ENCODE measurements at regions of chr2 and their contacts with region 1.

Region 1: GRCh38 chr2:181953881-181954537 is 31.6 kb upstream of the PPP1R1C start:
- DNase-seq: peak; percentile 84
- H3K4me3 ChIP-seq: peak overlapping the region; percentile 61
- H3K27ac ChIP-seq: no peak overlapping the region
- H3K4me1 ChIP-seq: peaks cover 11% of the 10 kb centered on the region
- CTCF ChIP-seq: peak; percentile 84

Region 2: DNA sequence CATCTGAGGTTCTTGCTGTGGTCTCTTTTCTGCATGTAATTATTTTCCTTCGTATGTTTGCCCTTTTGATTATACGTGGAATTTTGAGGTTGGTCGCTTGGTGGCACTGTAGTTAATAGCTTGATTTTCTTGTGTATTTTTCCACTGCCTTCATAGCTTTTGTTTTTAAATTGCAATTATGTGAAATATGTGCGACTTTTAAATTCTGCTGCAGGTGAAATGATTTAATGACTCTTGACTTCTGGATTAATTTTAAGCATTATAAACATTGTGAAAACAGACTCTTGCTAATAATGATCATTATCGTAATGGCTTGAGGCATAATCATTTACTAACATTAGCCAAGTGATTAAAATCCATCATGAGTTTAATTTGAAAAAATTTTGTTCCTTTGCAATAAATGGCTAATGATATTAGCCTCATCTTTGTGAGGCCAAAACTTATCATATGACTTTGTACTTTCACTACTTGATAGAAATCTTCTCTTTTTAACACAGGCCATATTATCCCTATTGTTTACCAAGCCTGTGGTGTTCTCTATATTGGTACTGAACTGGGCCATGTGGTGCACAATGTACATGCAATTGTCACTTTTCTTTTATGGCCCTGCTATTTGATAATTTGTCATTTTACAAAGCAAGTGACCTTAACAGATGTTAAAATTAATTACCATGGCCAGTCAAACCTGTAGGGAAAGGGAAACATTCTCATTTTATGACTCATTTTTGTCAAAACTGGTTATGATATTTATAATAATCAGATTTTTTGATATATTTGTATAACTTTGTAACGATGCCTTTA is 210.9 kb before region 1 on chr2:
- CTCF ChIA-PET with region 1: interaction called, 3 read pairs
- POLR2A ChIA-PET with region 1: no interaction called
- intact Hi-C with region 1: loop called (anchors 2 kb)
- DNase-seq: peak; percentile 46
- H3K4me3 ChIP-seq: no peak overlapping the region
- H3K27ac ChIP-seq: no peak overlapping the region
- H3K4me1 ChIP-seq: no peaks in the 10 kb centered on the region
- CTCF ChIP-seq: peak; percentile 91

Region 3: GRCh38 chr2:181904022-181904632 is 49.9 kb before region 1 on chr2:
- CTCF ChIA-PET with region 1: no interaction called
- POLR2A ChIA-PET with region 1: no interaction called
- intact Hi-C with region 1: no loop called
- DNase-seq: peak; percentile 42
- H3K4me3 ChIP-seq: no peak overlapping the region
- H3K27ac ChIP-seq: no peak overlapping the region
- H3K4me1 ChIP-seq: peaks cover 15% of the 10 kb centered on the region
- CTCF ChIP-seq: peak; percentile 91

Region 4: DNA sequence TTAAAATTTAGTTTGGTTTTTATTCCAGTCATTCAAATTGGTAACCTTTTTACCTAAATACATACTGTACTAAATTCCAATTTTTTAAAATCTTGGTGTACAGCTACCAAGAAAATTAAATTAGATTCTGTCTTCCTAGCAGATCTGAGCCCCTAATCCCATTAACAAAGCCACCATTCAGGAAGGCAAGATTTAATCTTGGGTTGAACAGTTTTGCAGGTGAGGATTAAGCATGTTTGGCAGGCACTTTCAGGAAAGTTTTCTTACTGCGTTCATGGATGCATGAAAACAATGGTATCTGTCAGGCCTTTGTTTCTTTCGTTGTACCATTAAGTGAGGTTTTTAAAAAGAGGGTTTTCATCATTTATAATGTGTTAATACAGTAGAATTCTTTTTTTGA is 29.7 kb before region 1 on chr2:
- CTCF ChIA-PET with region 1: no interaction called
- POLR2A ChIA-PET with region 1: interaction called, 10 read pairs
- intact Hi-C with region 1: no loop called
- DNase-seq: no peak
- H3K4me3 ChIP-seq: no peak overlapping the region
- H3K27ac ChIP-seq: no peak overlapping the region
- H3K4me1 ChIP-seq: no peaks in the 10 kb centered on the region
- CTCF ChIP-seq: no peak

Region 5: DNA sequence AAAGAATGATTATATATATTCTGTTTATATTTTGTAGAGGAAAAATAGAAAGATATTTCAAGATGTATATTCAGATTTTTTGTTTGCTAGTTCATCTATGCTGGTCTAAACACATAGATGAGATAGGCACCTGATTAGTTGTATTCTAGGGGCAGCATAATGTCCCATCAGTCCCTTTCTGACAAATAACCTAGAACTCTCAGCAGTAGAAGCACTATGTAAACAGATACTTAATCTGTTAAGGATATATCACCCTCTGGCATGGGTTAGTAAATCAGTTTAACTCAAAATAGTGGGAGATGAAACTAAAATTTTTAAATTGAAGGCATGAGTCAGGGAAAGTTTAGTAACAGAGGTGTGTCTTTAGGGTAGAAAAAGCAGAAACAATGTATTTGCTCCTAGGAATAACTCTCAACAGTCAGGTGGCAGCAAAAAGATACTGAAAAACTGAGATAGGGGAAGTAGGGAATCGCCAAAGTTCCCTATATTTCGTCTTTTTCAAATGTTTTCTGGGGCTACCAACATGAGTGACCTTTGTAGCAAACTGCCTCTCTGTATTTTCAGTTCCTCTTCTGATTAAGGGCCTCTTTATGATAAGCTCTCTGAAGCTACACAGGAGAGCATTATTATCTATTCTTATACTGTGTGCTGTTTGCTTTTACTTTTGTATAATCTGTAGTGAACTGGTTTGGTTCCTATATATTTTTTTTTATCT is 37.3 kb after region 1 on chr2:
- CTCF ChIA-PET with region 1: no interaction called
- POLR2A ChIA-PET with region 1: interaction called, 4 read pairs
- intact Hi-C with region 1: loop called (anchors 2 kb)
- DNase-seq: peak; percentile 68
- H3K4me3 ChIP-seq: peak overlapping the region; percentile 32
- H3K27ac ChIP-seq: peak overlapping the region; percentile 57
- H3K4me1 ChIP-seq: peaks cover 17% of the 10 kb centered on the region
- CTCF ChIP-seq: no peak

Region 6: GRCh38 chr2:182077451-182078142 is 123.6 kb after region 1 on chr2:
- CTCF ChIA-PET with region 1: no interaction called
- POLR2A ChIA-PET with region 1: no interaction called
- intact Hi-C with region 1: loop called (anchors 5 kb)
- DNase-seq: peak; percentile 64
- H3K4me3 ChIP-seq: no peak overlapping the region
- H3K27ac ChIP-seq: no peak overlapping the region
- H3K4me1 ChIP-seq: no peaks in the 10 kb centered on the region
- CTCF ChIP-seq: peak; percentile 78